Activated CD4-positive, alpha-beta memory T cell treated with anti-CD3 and anti-CD28 coated beads, Interleukin-2, amount 10 ng/mL, durations not matched to agents 7 days and 5 days (primary cell): ENCODE measurements at regions of chr17 and their contacts with region 1.

Region 1: GRCh38 chr17:45317112-45317928 is 500 bp upstream of the MAP3K14 start:
- DNase-seq: peak; percentile 100
- H3K4me3 Mint-ChIP-seq: peak overlapping the region; percentile 82
- H3K27ac Mint-ChIP-seq: peak overlapping the region; percentile 82
- H3K4me1 Mint-ChIP-seq: peaks cover 73% of the 10 kb centered on the region
- H3K27me3 Mint-ChIP-seq: no peaks in the 10 kb centered on the region

Region 2: DNA sequence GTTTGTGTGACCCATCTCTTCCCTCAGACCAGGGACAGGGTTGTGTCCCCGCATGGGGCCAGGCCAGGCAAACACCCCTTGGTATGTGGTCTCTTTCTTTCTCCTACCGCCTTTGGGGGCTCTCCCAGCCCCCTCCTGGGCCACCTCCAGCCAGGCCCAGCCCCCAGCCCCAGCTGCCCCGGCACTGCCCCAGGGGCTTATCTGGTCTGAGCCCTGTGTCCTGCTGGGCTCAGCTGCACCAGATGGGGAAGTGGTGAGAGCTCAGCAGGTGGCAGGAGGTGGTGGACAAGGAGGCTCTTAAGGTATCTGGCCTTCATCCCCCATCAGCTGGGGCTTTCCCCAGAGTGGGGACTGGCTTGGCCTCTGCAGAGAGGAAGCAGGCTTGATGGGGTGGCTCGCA is 549.8 kb before region 1 on chr17:
- CTCF ChIA-PET with region 1: no interaction called
- POLR2A ChIA-PET with region 1: no interaction called
- DNase-seq: no peak
- H3K4me3 Mint-ChIP-seq: no peak overlapping the region
- H3K27ac Mint-ChIP-seq: no peak overlapping the region
- H3K4me1 Mint-ChIP-seq: peaks cover 10% of the 10 kb centered on the region
- H3K27me3 Mint-ChIP-seq: peaks cover 4% of the 10 kb centered on the region

Region 3: GRCh38 chr17:45247429-45248131 is 69.7 kb before region 1 on chr17:
- CTCF ChIA-PET with region 1: interaction called, 10 read pairs
- POLR2A ChIA-PET with region 1: interaction called, 30 read pairs
- DNase-seq: peak; percentile 99
- H3K4me3 Mint-ChIP-seq: peak overlapping the region; percentile 87
- H3K27ac Mint-ChIP-seq: peak overlapping the region; percentile 84
- H3K4me1 Mint-ChIP-seq: peaks cover 62% of the 10 kb centered on the region
- H3K27me3 Mint-ChIP-seq: no peaks in the 10 kb centered on the region

Region 4: DNA sequence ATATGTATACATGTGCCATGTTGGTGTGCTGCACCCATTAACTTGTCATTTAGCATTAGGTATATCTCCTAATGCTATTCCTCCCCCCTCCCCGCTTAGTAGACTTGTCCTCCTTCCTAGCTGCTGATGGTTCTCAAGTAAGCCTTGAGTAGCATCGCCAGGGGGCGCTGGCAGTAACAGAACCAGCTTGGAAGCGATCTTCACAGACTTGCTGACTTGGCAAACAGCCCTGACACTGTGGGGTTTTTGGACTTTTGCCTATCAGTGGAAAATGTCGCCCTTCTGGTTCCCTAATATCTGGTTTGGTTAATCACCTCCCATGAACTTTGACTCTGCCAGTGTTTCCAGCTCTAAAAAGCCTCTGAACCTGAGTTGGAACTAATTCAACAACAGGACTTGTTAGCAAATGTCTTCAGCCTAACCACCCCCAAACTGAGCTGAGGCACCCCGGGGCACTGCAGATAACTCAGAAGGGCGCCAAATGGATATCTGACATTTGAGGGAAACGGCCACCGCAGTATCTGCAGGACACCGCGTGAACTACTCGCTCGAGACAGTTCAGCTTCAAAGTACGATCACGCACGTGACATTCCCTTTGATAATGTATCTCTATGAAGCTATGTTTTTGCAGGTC is 40.0 kb before region 1 on chr17:
- CTCF ChIA-PET with region 1: interaction called, 54 read pairs
- POLR2A ChIA-PET with region 1: interaction called, 27 read pairs
- DNase-seq: peak; percentile 92
- H3K4me3 Mint-ChIP-seq: no peak overlapping the region
- H3K27ac Mint-ChIP-seq: no peak overlapping the region
- H3K4me1 Mint-ChIP-seq: peaks cover 17% of the 10 kb centered on the region
- H3K27me3 Mint-ChIP-seq: no peaks in the 10 kb centered on the region

Region 5: GRCh38 chr17:45371414-45372327 is 54.4 kb after region 1 on chr17:
- CTCF ChIA-PET with region 1: no interaction called
- POLR2A ChIA-PET with region 1: interaction called, 11 read pairs
- DNase-seq: no peak
- H3K4me3 Mint-ChIP-seq: no peak overlapping the region
- H3K27ac Mint-ChIP-seq: no peak overlapping the region
- H3K4me1 Mint-ChIP-seq: peaks cover 15% of the 10 kb centered on the region
- H3K27me3 Mint-ChIP-seq: peaks cover 17% of the 10 kb centered on the region

Region 6: GRCh38 chr17:45410144-45411091 is 93.1 kb after region 1 on chr17:
- CTCF ChIA-PET with region 1: no interaction called
- POLR2A ChIA-PET with region 1: interaction called, 17 read pairs
- DNase-seq: peak; percentile 72
- H3K4me3 Mint-ChIP-seq: peak overlapping the region; percentile 100
- H3K27ac Mint-ChIP-seq: peak overlapping the region; percentile 98
- H3K4me1 Mint-ChIP-seq: peaks cover 57% of the 10 kb centered on the region
- H3K27me3 Mint-ChIP-seq: no peaks in the 10 kb centered on the region